Posterior vena cava (tissue), 2 donors: ENCODE measurements at regions of chr14 and their contacts with region 1.

Region 1: GRCh38 chr14:31858868-31859267 is 218.2 kb upstream of the ARHGAP5 start:
- DNase-seq: no peak

Region 2: DNA sequence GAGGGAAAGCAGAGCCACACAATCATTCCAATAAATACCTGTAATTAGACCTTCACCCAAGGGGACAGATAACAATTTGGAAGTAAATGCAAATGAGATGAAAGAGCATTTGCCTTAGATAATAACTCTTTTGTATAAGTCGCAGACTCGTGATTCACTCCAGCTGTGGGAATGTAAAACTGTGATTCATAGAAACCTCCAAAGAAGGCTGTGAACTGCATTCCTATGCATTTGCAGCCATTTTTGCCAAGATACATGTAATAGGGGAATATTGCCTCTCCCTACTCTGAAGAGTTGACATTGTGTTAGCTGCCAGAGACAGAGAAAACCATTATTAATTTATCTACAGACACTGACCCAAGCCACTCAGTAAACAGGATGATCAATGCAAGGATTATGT is 36.3 kb after region 1 on chr14:
- intact Hi-C with region 1: no loop called
- DNase-seq: no peak

Region 3: DNA sequence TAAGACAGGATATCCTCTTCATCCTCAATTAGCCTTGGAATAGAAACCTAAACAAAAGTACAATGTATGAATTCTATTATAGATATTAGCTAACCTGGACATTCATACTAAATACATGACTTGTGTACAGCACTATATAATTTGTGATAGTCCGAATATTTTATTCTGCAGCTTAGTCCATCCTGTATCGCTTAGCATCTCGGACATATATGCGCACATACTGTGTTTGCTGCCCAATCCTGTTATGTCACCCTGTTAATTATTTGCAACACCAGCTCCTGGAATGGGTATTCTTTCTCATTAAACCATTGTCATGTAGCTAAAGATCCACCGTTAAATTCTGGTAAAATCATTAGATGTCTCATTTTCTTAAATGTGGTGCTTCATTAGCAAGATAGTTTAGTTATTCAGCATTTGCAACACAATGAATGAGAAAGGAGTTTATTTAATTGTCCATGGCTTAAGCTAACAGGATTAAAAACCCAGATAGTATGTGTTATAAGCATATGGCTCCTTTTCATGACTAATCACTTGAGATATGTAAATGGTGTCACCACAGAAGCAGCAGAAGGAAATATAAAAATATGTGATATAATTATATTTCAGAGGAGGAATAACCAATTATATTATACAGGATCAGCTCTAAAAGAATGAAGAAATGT is 62.3 kb after region 1 on chr14:
- intact Hi-C with region 1: loop called in 1 of 2 experiments (anchors 2 kb)
- DNase-seq: no peak